ENCODE measurements at regions of chr3 and their contacts with region 1.

Region 1: GRCh38 chr3:51682079-51682478 is 11.0 kb downstream of the TEX264 start:
- DNase-seq: peak; percentile 85
- H3K27ac ChIP-seq: peak overlapping the region; percentile 82
- CTCF ChIP-seq: peak; percentile 83

Region 2: DNA sequence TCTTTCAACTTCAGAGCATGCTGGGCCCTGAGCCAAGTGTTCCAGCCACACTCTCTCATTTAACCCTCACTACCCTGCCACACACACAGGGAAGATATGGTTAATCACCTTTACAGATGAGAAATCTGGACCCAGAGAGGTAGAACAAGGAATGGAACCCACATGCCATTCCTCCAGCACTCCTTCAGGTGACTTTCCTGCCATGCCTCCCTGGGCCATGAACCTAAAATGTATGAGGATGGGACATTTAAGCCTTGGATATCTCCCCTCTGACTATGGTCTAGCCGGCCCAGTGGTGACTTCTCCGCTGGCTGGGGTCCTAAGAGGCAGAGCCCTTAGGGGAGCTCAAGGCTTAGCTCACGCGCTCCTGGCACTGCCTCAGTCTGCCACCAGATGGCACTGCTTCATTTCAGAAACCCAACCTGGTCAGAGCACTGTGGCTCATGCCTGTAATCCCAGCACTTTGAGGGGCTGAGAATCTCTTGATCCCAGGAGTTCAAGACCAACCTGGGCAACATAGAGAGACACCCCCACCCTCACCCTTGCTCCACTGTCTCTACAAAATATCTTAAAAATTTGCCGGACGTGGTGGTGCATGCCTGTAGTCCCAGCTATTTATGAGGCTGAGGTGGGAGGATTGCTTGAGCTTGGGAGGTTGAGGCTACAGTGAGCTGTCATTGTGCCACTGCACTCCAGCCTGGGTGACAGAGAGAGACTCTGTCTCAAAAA is 180.1 kb before region 1 on chr3:
- CTCF ChIA-PET with region 1: interaction called, 10 read pairs
- POLR2A ChIA-PET with region 1: no interaction called
- DNase-seq: peak; percentile 42
- H3K27ac ChIP-seq: no peak overlapping the region
- CTCF ChIP-seq: peak; percentile 92

Region 3: DNA sequence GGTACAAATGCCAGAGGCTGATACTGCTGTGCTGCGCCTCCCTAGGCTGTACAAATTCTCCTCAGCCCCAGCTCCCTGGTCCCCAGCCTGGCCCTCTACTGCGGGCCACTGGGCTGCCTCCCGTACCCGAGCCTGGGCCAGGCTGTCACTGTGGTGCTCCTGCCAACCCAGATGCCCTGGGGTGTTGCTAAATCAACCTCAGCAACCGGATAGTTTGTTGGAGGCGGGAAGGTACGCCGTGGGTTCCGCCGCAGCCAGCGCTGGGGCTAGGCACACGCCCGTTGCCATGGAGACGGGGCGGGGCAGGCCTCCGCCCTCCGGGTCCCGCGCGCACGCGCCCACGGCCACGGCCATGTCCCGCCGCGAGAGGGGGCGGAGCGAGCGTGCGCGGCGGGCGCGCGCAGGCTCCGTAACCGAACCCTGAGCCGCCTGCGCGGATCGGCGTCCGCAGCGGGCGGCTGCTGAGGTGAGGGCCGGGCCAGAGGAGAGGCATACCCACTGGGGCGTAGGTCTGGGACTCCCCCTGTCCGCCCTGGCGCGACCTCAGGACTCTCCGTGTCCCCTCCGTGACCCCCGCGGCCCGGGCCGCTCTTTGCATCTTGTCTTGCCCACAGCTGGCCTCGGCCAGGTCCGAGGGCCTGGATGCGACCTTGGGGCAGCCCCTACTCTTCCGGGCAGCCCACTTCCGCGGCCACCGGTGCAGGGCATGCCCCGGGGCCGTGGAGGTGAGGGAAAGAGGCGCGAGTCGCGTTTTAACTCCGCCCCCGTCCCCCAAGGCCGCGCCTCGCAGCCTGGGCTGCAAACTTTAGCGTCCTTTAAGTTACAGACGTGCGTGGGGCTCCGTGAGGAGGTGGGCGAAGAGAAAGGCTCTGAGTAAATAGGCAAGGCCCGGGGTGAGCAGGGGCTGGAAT is 11.0 kb before region 1 on chr3 and contains the start of gene TEX264:
- CTCF ChIA-PET with region 1: interaction called, 10 read pairs
- POLR2A ChIA-PET with region 1: no interaction called
- DNase-seq: peak; percentile 83
- H3K27ac ChIP-seq: peak within 1 kb of the TSS; percentile 95
- CTCF ChIP-seq: no peak

Region 4: DNA sequence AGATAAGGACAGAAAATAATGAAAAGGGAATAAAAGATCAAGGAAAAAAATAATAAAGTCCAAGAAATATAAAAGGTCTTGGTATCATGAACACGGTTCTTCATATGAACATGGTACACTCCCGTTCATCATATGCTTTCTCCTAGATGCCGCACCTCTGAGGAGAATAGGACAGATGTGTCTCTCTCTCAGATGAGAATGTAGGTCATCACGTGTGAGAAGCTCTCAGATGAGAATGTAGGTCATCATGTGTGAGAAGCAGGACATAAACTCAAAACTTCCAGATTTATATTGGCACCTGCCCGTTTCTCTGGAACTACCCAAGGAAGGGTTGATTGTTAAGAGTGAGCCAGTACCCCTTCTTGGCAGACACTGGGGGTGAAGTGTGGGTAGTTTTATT is 126.9 kb after region 1 on chr3:
- CTCF ChIA-PET with region 1: no interaction called
- POLR2A ChIA-PET with region 1: no interaction called
- DNase-seq: no peak
- H3K27ac ChIP-seq: no peak overlapping the region
- CTCF ChIP-seq: no peak